Left ventricle myocardium superior (tissue), 1 donor: ENCODE measurements at regions of chr13 and their contacts with region 1.

Region 1: DNA sequence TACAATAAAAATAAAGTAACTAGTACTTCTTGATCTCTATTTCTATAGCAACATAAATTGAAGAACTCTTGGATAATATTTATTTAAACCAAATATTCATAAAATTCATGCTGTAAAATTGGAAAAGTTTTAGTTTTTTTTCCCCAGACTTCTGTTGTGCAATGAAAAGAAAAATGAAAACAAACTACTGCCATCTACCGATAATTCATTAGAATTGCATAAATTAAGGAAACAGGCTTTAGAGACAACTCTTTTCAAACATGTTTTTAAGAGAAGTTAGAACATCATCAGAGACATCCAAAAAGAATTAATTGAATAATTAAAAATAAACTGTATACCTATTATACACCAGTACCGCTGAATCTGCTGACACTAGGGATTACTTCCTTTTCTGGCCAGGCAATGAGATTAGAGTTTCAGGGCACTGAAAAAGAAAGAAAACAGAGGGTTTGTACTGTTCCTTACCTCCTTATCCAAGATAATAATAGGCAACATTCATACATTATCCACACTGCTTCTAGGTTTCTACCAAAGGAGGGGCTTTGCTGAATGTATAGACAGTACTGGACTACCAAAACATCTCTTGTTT is 4.9 kb downstream of the CCDC122 start:
- DNase-seq: no peak
- ATAC-seq: no peak

Region 2: DNA sequence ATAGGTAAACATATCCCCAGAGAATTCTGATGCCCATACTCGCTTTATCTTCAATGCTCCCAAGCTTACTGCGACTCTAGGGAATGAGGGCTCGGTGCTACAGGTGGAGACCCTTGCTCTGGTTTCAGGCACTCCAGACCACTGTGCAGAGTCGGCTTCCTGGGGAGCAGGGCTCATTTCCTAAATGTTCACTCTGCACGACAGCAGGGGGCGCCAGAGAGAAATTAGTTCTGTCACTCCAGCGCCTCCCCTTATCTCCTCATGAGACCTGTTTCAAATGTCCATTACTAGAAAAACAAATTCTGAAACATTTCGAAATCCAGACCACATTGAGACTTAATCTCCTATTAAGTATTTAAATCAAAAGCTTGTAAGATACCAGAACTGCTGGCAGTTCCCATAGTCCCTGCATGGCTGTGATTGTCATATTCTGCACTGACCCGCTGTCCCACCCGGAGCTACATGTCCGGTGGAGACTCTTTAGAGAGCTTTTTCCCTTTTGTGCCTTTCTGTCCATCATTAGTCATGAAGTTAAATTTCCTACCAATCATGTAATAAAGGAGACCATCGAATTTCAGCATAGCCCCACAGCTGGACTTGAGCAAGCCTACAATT is 904.9 kb before region 1 on chr13:
- intact Hi-C with region 1: loop called (anchors 5 kb)
- DNase-seq: peak; percentile 87
- ATAC-seq: peak; percentile 96